ENCODE measurements at regions of chr11 and their contacts with region 1.

Region 1: GRCh38 chr11:47642099-47642855 is at the start of gene MTCH2:
- DNase-seq: peak; percentile 95
- H3K4me3 Mint-ChIP-seq: peak within 1 kb of the TSS; percentile 96
- H3K27ac Mint-ChIP-seq: peak within 1 kb of the TSS; percentile 97
- H3K4me1 Mint-ChIP-seq: peaks cover 30% of the 10 kb centered on the region
- H3K27me3 Mint-ChIP-seq: no peaks in the 10 kb centered on the region
- total RNA-seq, gene MTCH2: 116 and 118 TPM in 2 replicates

Region 2: DNA sequence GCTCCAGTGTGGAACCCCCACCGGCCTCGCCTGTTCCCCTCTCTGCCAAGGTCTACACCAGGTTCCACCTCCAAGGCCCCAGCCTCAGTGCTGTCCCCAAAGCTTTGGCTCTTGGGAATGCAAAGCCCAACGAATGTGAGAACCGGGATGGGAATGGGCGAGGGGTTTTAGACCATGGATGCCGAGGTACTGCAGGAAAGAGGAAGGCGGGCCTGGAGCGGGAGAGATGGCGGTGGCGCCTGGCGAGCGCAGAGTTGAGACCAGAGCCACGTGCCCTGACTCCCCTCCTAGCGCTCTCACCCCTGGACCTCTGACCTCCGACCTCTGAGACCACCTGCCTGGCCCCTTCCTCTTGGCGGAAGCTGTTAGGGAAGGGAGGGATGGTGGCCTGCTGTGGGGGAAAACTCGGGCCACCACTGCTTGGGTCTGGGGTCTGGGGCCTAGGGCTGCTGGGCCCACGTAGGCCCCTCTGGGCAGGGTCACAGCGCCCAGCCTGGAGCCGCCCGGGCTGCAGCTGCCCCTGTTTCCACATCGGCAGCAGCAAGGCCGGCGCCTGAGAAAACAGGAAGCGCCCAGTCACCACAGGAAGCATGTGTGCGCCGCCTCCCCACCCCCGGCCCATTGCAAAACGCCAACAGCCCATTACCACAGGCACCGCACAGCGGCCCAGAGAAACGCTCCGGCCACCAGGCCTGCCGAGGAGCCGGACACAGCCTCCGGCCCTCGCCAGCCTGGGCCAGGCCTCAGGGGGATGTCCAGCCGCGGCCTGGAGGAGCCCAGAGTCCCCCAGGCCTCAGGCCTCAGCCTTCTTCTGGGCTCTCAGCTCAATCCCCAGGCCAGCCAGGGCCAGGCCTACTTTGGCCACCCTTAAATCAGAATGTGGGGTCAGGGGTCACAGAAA is 247.7 kb before region 1 on chr11:
- intact Hi-C with region 1: loop called (anchors 1 kb)
- DNase-seq: peak; percentile 53
- H3K4me3 Mint-ChIP-seq: no peak overlapping the region
- H3K27ac Mint-ChIP-seq: peak overlapping the region; percentile 87
- H3K4me1 Mint-ChIP-seq: peaks cover 10% of the 10 kb centered on the region
- H3K27me3 Mint-ChIP-seq: no peaks in the 10 kb centered on the region

Region 3: GRCh38 chr11:47552566-47553416 is 89.5 kb before region 1 on chr11 and contains the start of gene CELF1:
- intact Hi-C with region 1: loop called (anchors 1 kb)
- DNase-seq: peak; percentile 92
- H3K4me3 Mint-ChIP-seq: peak within 1 kb of the TSS; percentile 99
- H3K27ac Mint-ChIP-seq: peak within 1 kb of the TSS; percentile 97
- H3K4me1 Mint-ChIP-seq: peaks cover 40% of the 10 kb centered on the region
- H3K27me3 Mint-ChIP-seq: no peaks in the 10 kb centered on the region
- total RNA-seq, gene CELF1: 148 and 155 TPM in 2 replicates

Region 4: GRCh38 chr11:47667135-47667534 is 24.9 kb after region 1 on chr11:
- intact Hi-C with region 1: loop called (anchors 1 kb)
- DNase-seq: no peak
- H3K4me3 Mint-ChIP-seq: no peak overlapping the region
- H3K27ac Mint-ChIP-seq: no peak overlapping the region
- H3K4me1 Mint-ChIP-seq: peaks cover 6% of the 10 kb centered on the region
- H3K27me3 Mint-ChIP-seq: no peaks in the 10 kb centered on the region

Region 5: DNA sequence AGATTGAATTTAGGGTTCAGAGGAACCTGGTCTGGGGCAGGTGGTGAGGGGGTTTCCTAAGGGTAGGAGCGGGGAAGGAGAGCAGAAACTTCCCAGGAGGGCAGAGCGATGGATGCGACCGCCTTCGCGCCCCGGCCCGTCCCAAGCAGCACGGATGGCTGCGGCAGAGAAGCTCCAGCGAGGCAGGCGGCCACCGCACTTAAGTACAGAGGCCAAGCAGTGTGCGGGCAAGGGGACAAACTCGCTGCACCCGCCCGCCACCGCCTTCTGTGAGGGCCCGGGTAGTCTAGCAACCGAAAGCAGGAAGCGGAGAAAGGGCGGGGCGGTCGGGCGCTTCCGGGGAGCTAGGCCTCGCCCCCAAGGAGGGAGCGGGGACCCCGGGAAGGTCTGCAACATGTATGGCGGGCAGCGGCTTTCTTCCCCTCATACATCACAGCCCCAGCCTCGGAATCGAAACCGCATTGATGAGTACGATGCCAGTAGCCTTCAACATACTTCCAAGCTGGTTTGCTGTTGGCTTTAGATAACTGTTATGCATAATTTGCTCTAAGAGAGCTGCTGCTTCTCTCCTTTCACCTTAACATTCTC is 72.9 kb after region 1 on chr11 and contains the start of gene AGBL2:
- intact Hi-C with region 1: loop called (anchors 1 kb)
- DNase-seq: peak; percentile 84
- H3K4me3 Mint-ChIP-seq: peak within 1 kb of the TSS; percentile 93
- H3K27ac Mint-ChIP-seq: peak within 1 kb of the TSS; percentile 96
- H3K4me1 Mint-ChIP-seq: peaks cover 31% of the 10 kb centered on the region
- H3K27me3 Mint-ChIP-seq: no peaks in the 10 kb centered on the region
- total RNA-seq, gene AGBL2: 3.2 and 5.5 TPM in 2 replicates

Measured in activated T-helper 1 cell treated with anti-CD3 and anti-CD28 coated beads, Interleukin-12 subunit alpha, Interleukin-12 subunit beta, Interleukin-2, Interleukin-4 antibody, amounts not matched to agents 30 ng/mL and 10 ng/mL and 1 ng/mL, durations not matched to agents 14 hours and 24 hours and 36 hours (primary cell).